A673 (cell line): ENCODE measurements at regions of chr20 and their contacts with region 1.

Region 1: GRCh38 chr20:3000852-3001523 is 42.4 kb upstream of the GNRH2 start:
- DNase-seq: peak; percentile 76
- H3K4me3 ChIP-seq: no peak overlapping the region
- H3K27ac ChIP-seq: no peak overlapping the region
- H3K4me1 ChIP-seq: no peaks in the 10 kb centered on the region
- H3K27me3 ChIP-seq: no peaks in the 10 kb centered on the region
- CTCF ChIP-seq: peak; percentile 64

Region 2: GRCh38 chr20:2697768-2698167 is 303.2 kb before region 1 on chr20:
- CTCF ChIA-PET with region 1: interaction called, 12 read pairs
- POLR2A ChIA-PET with region 1: no interaction called
- intact Hi-C with region 1: loop called (anchors 5 kb)
- DNase-seq: no peak
- H3K4me3 ChIP-seq: no peak overlapping the region
- H3K27ac ChIP-seq: no peak overlapping the region
- H3K4me1 ChIP-seq: peaks cover 13% of the 10 kb centered on the region
- H3K27me3 ChIP-seq: peaks cover 29% of the 10 kb centered on the region
- CTCF ChIP-seq: no peak